BJ (cell line): ENCODE measurements at regions of chr1 and their contacts with region 1.

Region 1: DNA sequence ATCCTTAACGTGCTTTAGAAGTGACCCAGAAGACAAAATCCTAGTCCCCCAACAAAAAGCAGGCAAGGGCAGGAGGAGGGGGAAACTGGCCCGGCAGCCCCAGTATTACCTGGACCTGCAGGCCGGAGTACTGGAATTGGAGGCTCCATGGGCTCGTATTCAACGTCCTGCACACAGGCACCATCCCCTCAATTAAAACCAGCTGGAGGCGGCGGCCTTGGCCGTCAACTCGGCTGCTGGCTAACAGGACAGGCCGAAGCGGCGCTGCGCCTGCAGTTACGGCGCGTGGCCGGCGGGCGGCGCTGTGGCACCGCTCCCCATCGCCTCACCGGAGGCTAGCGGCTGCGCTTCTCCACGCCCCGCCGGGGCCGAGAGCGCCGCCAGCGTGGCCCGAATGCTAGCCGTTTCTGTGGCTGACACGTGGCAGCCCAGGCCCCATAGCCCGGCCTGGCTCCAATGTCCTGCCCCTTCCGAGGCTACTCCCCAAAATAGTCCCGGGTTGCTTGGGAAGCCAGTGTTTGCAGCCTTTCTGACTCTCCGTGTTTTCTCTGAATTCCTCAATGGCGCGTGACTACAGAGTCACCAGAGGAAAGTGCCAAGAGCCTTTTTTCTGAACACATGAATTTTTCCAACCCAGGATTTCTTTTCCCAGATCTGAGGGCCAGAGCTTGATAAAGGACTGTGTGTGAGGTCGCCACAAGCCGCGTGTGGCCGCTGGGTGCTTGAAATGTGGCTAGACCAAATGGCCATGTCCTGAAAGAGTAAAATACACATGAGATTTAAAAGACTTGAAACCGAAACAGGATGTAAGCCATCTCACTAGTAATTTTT is 82.5 kb downstream of the HHIPL2 start:
- DNase-seq: peak; percentile 80
- H3K4me3 ChIP-seq: peak overlapping the region; percentile 31
- H3K27me3 ChIP-seq: no peaks in the 10 kb centered on the region
- CTCF ChIP-seq: peak; percentile 79

Region 2: GRCh38 chr1:222627232-222627631 is 161.8 kb after region 1 on chr1:
- CTCF ChIA-PET with region 1: interaction called, 105 read pairs
- POLR2A ChIA-PET with region 1: no interaction called
- DNase-seq: no peak
- H3K4me3 ChIP-seq: no peak overlapping the region
- H3K27me3 ChIP-seq: no peaks in the 10 kb centered on the region
- CTCF ChIP-seq: no peak

Region 3: GRCh38 chr1:222634180-222635013 is 169.0 kb after region 1 on chr1:
- CTCF ChIA-PET with region 1: interaction called, 105 read pairs
- POLR2A ChIA-PET with region 1: interaction called, 3 read pairs
- DNase-seq: peak; percentile 69
- H3K4me3 ChIP-seq: no peak overlapping the region
- H3K27me3 ChIP-seq: no peaks in the 10 kb centered on the region
- CTCF ChIP-seq: peak; percentile 82

Region 4: GRCh38 chr1:222754366-222755139 is 289.1 kb after region 1 on chr1:
- CTCF ChIA-PET with region 1: no interaction called
- POLR2A ChIA-PET with region 1: no interaction called
- DNase-seq: peak; percentile 98
- H3K4me3 ChIP-seq: no peak overlapping the region
- H3K27me3 ChIP-seq: no peaks in the 10 kb centered on the region
- CTCF ChIP-seq: no peak